MCF 10A (cell line): ENCODE measurements at regions of chr15 and their contacts with region 1.

Region 1: GRCh38 chr15:92365067-92365466 is 28.6 kb upstream of the ST8SIA2 start:
- DNase-seq: peak; percentile 94
- H3K4me3 Mint-ChIP-seq: peak overlapping the region; percentile 15
- H3K27ac Mint-ChIP-seq: no peak overlapping the region
- H3K4me1 Mint-ChIP-seq: peaks cover 29% of the 10 kb centered on the region
- H3K27me3 Mint-ChIP-seq: no peaks in the 10 kb centered on the region
- CTCF ChIP-seq: no peak

Region 2: DNA sequence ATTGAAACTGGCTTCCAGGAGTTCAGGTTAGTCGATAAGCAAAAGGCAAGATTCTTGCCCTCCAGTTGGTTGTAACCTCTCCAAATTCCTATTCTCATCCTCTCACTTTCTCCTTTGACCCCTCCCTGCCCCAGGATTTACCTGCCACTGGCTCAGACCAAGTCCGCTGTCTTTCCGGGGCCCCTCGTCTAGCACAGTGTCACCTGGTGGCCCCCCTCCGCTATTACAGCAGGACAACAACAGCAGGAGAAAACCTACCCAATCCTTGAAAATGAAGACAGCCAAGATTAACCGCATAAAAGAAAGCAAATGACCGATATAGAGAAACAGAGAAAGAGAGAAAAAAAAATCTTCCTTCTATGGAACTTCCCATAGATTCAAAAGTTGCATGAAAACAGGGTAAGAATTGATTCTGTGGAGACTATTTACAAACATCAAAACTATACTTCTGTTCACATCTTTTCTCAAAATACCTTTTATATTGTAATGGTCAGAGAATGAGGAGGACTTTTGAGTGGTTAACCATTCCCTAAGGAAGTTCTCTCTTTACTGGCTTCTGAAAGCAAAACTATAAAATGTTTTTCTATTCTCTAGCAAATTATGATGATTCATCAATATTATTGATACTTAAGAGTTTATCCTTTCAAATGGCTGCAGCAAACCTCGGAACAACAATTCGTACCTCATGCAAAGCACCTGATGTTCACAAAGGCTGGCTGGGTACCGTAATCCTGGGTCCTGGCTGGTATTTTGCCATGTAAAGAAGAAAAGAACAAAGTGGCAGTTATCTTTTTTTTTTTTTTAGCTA is 18.7 kb after region 1 on chr15:
- CTCF ChIA-PET with region 1: interaction called, 5 read pairs
- POLR2A ChIA-PET with region 1: interaction called, 11 read pairs
- intact Hi-C with region 1: no loop called
- DNase-seq: peak; percentile 42
- H3K4me3 Mint-ChIP-seq: no peak overlapping the region
- H3K27ac Mint-ChIP-seq: no peak overlapping the region
- H3K4me1 Mint-ChIP-seq: peaks cover 19% of the 10 kb centered on the region
- H3K27me3 Mint-ChIP-seq: peaks cover 46% of the 10 kb centered on the region
- CTCF ChIP-seq: peak; percentile 55